Caco-2 (cell line): ENCODE measurements at regions of chr6 and their contacts with region 1.

Region 1: GRCh38 chr6:137799950-137800568 is 67.0 kb upstream of the TNFAIP3 start:
- DNase-seq: peak; percentile 47 to 52
- H3K4me3 ChIP-seq: no peak overlapping the region
- H3K4me3 Mint-ChIP-seq: no peak overlapping the region
- H3K27ac Mint-ChIP-seq: peak overlapping the region; percentile 72
- H3K4me1 ChIP-seq: peaks cover 98% of the 10 kb centered on the region
- H3K4me1 Mint-ChIP-seq: peaks cover 43% of the 10 kb centered on the region
- H3K27me3 ChIP-seq: no peaks in the 10 kb centered on the region
- H3K27me3 Mint-ChIP-seq: no peaks in the 10 kb centered on the region
- CTCF ChIP-seq: peak; percentile 27 to 33

Region 2: DNA sequence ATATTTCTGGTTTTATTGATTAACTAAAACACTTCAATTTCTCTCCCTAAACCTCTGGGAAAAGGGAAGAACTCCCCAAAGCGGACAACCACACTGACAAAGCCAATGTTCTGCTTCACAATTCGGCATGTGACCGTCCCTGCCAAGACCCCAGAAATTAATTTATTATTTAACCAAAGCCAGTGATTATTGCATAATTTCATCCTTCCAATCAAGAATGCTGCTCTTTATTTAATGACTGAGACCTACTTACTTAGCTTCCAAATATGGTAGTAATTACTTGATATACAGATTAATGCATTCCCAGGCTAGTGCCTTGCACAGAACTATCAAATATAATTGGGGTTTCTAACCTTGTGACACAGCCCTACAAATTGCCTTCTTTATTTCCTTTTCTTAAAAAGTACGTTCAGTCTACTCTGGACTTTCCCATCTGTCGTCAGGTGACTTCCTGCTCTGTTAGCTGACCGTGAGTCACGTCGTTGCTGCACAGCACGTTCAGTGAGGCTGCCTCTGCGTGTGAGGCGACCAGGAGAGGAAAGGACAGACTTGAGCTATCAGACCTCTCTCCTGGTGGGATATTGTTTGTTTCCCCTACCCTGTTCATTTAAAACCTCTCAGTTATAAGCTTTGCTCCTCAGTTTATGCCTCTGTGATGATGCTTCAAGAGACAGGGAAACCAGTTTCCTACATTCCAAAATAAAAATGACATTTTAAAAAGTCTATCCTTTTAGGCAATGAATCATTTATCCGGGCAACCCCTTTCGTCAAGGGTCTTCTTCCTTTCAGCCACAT is 11.3 kb after region 1 on chr6:
- CTCF ChIA-PET with region 1: no interaction called
- POLR2A ChIA-PET with region 1: interaction called, 4 read pairs
- intact Hi-C with region 1: loop called (anchors 1 kb)
- DNase-seq: peak; percentile 63 to 76
- H3K4me3 ChIP-seq: no peak overlapping the region
- H3K4me3 Mint-ChIP-seq: peak overlapping the region; percentile 67
- H3K27ac Mint-ChIP-seq: peak overlapping the region; percentile 74
- H3K4me1 ChIP-seq: peaks cover 41% of the 10 kb centered on the region
- H3K4me1 Mint-ChIP-seq: peaks cover 33% of the 10 kb centered on the region
- H3K27me3 ChIP-seq: no peaks in the 10 kb centered on the region
- H3K27me3 Mint-ChIP-seq: no peaks in the 10 kb centered on the region
- CTCF ChIP-seq: no peak

Region 3: DNA sequence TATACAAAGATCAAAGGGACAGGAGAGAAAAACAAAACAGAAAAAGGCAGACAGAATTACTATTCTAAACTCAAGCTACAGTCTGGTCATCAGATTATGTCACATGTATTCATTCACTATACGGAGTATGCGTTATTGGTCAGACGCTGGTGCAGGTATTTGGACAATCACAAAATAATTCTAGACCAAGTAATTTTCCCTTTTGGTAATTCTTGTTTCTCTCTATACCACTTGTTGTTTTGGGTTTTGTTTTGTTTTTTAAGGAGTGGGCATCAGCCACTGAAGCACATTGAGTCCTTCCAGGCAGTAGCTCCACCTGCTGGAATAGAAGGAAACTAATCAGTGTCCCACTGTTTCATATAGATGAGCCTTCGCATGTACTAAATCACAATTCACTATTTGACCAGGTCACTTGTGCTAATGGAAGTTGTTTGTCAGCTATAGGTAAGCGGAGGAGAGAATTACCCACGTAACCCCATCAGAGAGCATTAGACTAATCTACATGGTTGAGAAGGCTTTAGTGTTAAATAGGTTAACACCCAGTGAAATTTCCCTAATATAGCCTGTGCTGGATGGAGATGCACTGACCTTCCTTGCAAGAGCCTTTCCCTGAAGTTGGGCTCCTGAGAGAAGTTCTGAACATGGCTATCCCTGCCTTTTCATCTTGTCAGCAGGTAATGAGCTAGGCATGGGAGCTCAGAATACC is 144.9 kb after region 1 on chr6:
- CTCF ChIA-PET with region 1: no interaction called
- POLR2A ChIA-PET with region 1: no interaction called
- intact Hi-C with region 1: loop called (anchors 2 kb)
- DNase-seq: peak in 1 of 2 experiments; percentile 29
- H3K4me3 ChIP-seq: no peak overlapping the region
- H3K4me3 Mint-ChIP-seq: no peak overlapping the region
- H3K27ac Mint-ChIP-seq: no peak overlapping the region
- H3K4me1 ChIP-seq: 0 out of 2 replicates have a peak, but pooled peaks cover 3% of the 10 kb centered on the region
- H3K4me1 Mint-ChIP-seq: peaks cover 8% of the 10 kb centered on the region
- H3K27me3 ChIP-seq: no peaks in the 10 kb centered on the region
- H3K27me3 Mint-ChIP-seq: no peaks in the 10 kb centered on the region
- CTCF ChIP-seq: peak; percentile 62 to 63